PC-3 (cell line): ENCODE measurements at regions of chr4 and their contacts with region 1.

Region 1: DNA sequence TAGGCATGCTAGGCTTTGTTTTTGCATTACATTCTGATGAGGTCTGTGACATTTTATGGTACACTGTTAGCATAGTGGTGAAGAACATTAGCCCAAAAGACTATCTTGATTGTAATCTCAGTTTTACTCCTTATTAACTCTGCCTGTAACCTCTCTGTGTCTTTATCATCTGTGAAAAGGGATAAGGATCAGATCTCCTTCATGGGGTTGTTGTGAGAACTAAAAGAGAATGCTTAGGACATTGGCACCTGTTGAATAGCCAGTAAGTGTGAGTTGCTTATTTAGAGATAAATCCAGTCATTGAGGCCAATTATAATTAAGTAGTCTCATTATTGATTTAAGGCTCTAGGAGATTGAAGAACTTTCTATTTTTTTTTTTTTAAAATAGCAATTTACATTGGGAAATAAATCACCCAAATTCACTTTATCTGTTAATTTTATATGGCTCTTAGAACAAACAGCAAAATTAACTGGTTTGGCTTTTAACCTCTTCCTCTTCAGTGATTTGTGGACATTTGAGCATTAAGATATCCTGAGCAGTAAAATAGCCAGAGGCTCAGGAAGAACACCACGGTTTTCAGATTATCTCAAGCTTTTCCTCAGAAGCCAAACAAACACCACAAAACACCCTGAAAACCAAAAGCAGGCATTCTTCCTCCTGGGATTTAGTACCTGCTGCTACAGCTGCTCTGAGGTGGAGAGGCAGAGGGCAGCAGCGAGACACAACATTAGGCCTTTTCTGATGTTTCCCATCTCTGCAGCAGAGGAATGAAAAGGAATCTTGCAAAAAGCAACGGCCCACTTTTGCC is 192.9 kb downstream of the ARHGAP10 start:
- DNase-seq: peak; percentile 38
- ATAC-seq: peak; percentile 20
- H3K4me3 ChIP-seq: no peak overlapping the region
- H3K27ac ChIP-seq: no peak overlapping the region
- H3K4me1 ChIP-seq: peaks cover 27% of the 10 kb centered on the region
- H3K27me3 ChIP-seq: no peaks in the 10 kb centered on the region
- CTCF ChIP-seq: peak; percentile 62

Region 2: DNA sequence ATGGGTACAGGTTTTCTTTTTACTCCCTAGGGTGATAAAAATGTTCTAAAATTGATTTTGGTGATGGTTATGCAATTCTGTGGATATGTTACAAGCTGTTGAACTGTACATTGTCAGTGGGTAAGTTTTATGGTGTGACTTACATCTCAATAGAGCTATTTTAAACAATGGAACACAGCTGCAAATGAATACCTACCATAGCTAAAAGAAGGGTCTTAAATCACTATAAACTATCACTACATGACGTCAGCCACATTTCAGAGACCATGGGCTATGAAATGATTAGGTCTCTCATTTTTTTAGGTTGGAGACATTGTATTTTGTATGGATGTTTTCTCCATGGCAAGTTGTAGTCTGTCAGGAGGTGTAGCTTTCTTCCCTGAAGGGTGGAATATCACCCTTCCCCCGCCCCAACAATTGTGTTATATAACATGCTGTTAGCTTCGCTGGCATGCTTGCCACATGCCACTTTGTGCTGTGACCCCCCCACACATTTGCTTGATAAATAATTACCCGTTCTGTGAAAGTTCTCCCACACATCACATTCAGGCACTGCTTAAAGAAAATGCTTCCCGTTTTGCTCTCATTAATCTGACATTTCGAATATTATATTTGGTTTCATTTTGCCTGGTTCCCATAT is 33.2 kb before region 1 on chr4:
- CTCF ChIA-PET with region 1: no interaction called
- POLR2A ChIA-PET with region 1: no interaction called
- intact Hi-C with region 1: no loop called
- DNase-seq: no peak
- ATAC-seq: no peak
- H3K4me3 ChIP-seq: no peak overlapping the region
- H3K27ac ChIP-seq: no peak overlapping the region
- H3K4me1 ChIP-seq: no peaks in the 10 kb centered on the region
- H3K27me3 ChIP-seq: no peaks in the 10 kb centered on the region
- CTCF ChIP-seq: no peak

Region 3: DNA sequence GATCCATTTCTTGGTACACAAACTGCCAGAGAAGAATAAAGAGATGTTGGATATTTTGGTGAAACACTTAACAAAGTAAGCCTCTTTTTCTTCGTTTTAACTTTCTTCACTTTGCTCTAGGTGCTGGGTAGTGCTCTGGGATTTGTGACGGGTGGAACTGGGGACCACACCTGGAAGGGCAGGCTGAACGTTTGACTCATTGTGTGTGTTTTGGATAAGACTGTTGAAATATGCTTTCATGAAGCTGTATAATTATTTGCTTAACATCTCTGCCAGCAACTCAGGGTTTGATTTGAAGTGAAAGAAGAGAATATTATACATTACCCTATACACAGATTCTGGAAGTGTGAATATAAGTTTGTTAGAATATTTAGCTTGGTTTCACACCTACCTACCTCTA is 40.2 kb after region 1 on chr4:
- CTCF ChIA-PET with region 1: no interaction called
- POLR2A ChIA-PET with region 1: no interaction called
- intact Hi-C with region 1: loop called (anchors 1 kb)
- DNase-seq: peak; percentile 72
- ATAC-seq: peak; percentile 100
- H3K4me3 ChIP-seq: no peak overlapping the region
- H3K27ac ChIP-seq: no peak overlapping the region
- H3K4me1 ChIP-seq: peaks cover 10% of the 10 kb centered on the region
- H3K27me3 ChIP-seq: no peaks in the 10 kb centered on the region
- CTCF ChIP-seq: no peak

Region 4: GRCh38 chr4:147984065-147984777 is 59.4 kb after region 1 on chr4:
- CTCF ChIA-PET with region 1: interaction called, 10 read pairs
- POLR2A ChIA-PET with region 1: no interaction called
- intact Hi-C with region 1: no loop called
- DNase-seq: peak; percentile 60
- ATAC-seq: peak; percentile 73
- H3K4me3 ChIP-seq: no peak overlapping the region
- H3K27ac ChIP-seq: no peak overlapping the region
- H3K4me1 ChIP-seq: no peaks in the 10 kb centered on the region
- H3K27me3 ChIP-seq: no peaks in the 10 kb centered on the region
- CTCF ChIP-seq: peak; percentile 79

Region 5: DNA sequence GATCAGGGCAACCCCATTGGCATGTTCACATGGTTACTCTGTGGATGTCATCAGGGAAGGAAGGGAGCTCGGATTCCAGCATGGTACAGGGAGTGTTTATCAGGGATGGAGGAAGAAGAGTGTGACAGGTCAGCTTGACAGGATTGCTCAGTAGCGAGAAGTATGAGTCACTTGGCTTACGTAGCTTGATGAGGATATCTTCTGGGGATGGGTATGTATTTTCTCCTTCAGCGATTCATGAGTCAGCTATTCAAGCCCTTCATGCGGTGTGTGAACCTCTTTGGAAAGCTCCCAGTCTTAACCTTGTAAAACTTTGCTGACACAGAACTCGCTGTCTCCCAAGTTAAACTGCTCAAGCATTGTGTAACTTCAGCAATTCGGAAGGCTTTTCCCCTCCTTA is 82.5 kb after region 1 on chr4:
- CTCF ChIA-PET with region 1: interaction called, 4 read pairs
- POLR2A ChIA-PET with region 1: no interaction called
- intact Hi-C with region 1: loop called (anchors 1 kb)
- DNase-seq: peak; percentile 95
- ATAC-seq: peak; percentile 96
- H3K4me3 ChIP-seq: peak overlapping the region; percentile 55
- H3K27ac ChIP-seq: peak overlapping the region; percentile 93
- H3K4me1 ChIP-seq: peaks cover 20% of the 10 kb centered on the region
- H3K27me3 ChIP-seq: no peaks in the 10 kb centered on the region
- CTCF ChIP-seq: no peak

Region 6: DNA sequence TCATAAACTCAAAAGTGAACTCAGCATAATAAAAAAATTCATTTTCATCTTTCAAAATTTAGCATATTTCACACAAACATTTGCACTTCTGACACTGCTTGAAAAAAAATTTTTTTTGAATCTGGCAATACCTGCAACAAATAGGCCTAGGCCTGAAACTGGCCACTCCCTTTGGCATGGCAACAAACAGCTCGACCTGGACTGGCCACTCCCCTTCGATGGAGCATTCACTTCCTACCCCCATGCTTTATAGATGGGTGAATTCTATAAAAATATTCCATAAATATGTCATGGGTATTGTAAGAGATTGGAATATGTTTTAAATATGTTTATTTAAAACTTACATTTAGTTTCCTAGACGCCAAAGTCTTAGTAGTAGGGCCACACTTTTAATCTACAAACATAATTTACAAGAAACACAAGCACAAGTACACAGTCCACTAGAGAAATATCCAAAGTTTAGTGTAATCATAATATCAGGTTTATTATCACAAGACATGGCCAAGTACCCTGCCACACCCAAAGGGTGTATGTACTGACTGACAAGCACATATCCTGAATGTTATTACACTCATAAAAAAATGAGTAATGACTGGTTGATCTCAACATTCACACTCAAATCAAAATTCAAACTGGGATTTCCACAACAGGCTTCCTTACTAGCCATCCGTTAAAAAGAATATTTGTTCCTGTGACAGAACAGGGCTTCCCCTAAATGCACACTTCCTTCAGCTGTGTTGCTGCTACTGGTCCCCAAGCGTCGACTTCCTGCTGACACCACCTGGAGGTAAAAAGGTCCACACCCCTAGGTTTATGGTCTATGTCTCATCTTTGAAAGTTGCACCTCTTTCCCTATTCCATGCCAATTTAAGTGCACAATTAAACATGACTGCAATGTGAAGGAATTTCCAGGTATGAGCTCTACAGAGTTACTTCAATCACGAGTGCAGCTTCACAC is 245.9 kb after region 1 on chr4:
- CTCF ChIA-PET with region 1: interaction called, 4 read pairs
- POLR2A ChIA-PET with region 1: no interaction called
- intact Hi-C with region 1: loop called (anchors 10 kb)
- DNase-seq: peak; percentile 69
- ATAC-seq: peak; percentile 84
- H3K4me3 ChIP-seq: no peak overlapping the region; the same call in 1 of the 2 replicates
- H3K27ac ChIP-seq: peak overlapping the region; percentile 87
- H3K4me1 ChIP-seq: peaks cover 22% of the 10 kb centered on the region
- H3K27me3 ChIP-seq: no peaks in the 10 kb centered on the region
- CTCF ChIP-seq: no peak